ENCODE measurements at regions of chr7 and their contacts with region 1.

Region 1: DNA sequence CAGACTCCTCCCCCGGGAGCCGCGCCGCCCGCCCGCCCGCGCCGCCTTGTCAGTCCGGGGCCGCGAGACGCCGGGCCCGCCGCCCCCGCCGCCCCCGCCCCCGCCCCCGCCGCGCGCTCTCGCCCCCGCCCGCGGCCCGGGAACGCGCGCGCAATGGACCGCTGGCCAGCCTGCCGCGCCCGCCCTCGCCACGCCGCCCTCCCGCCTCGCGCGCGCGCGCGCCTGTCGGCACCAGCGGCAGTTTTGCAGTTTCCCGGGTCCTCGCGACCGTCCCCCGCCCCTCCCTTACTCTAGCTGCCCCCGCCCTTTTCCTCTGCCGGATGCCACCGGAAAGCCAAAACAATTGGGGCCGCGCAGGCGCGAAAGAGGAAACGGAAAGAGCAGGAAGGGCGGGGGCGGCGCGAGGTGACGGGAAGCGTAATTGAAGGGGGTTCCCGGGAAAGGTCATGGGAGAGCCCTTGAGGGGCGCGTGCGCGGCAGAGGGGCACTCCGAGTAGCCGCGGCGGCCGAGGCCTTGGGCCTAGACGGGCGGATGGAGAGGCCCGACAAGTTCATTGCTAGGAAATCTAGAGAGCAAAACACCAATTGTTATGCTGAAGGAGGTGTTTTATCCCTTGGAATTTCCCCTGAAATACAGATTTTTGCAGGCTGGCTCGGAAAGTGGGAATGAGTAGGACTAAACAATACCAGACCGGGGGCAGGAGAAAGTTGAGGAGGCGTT is 400 bp upstream of the KBTBD2 start:
- DNase-seq: peak; percentile 99
- H3K4me3 Mint-ChIP-seq: peak overlapping the region; percentile 91
- H3K27ac Mint-ChIP-seq: peak overlapping the region; percentile 100
- H3K4me1 Mint-ChIP-seq: peaks cover 51% of the 10 kb centered on the region
- H3K27me3 Mint-ChIP-seq: no peaks in the 10 kb centered on the region

Region 2: GRCh38 chr7:32506266-32507054 is 385.5 kb before region 1 on chr7:
- CTCF ChIA-PET with region 1: no interaction called
- POLR2A ChIA-PET with region 1: no interaction called
- intact Hi-C with region 1: loop called (anchors 2 kb)
- DNase-seq: peak; percentile 50
- H3K4me3 Mint-ChIP-seq: no peak overlapping the region
- H3K27ac Mint-ChIP-seq: peak overlapping the region; percentile 52
- H3K4me1 Mint-ChIP-seq: peaks cover 56% of the 10 kb centered on the region
- H3K27me3 Mint-ChIP-seq: no peaks in the 10 kb centered on the region

Region 3: DNA sequence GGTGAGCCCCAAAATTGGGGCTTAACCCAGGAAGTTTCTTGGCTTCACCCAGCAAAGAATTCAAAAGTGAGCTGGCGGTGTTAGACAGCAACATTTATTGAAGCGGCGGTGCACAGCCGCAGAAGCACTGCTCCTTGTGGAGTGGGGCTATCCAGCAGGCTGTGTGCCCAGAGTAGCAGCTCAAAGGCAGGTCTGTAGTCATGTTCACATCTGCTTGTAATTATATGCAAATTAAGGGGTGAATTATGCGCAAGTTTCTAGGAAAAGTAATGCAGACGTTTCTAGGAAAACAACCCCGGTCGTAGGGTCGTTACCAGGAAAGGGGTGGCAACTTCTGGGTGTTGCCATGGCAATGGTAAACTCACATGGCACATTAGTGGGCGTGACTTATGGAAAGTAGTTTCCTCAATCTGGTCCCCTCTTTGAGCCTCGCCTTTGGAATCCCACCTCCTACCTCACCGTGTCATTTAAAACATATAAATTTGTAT is 13.3 kb after region 1 on chr7:
- CTCF ChIA-PET with region 1: interaction called, 8 read pairs
- POLR2A ChIA-PET with region 1: interaction called, 98 read pairs
- intact Hi-C with region 1: loop called (anchors 1 kb)
- DNase-seq: peak; percentile 89
- H3K4me3 Mint-ChIP-seq: peak overlapping the region; percentile 73
- H3K27ac Mint-ChIP-seq: peak overlapping the region; percentile 93
- H3K4me1 Mint-ChIP-seq: peaks cover 17% of the 10 kb centered on the region
- H3K27me3 Mint-ChIP-seq: no peaks in the 10 kb centered on the region

Region 4: GRCh38 chr7:32921896-32922295 is 29.9 kb after region 1 on chr7:
- CTCF ChIA-PET with region 1: no interaction called
- POLR2A ChIA-PET with region 1: no interaction called
- intact Hi-C with region 1: no loop called
- DNase-seq: no peak
- H3K4me3 Mint-ChIP-seq: no peak overlapping the region
- H3K27ac Mint-ChIP-seq: no peak overlapping the region
- H3K4me1 Mint-ChIP-seq: no peaks in the 10 kb centered on the region
- H3K27me3 Mint-ChIP-seq: no peaks in the 10 kb centered on the region

Region 5: DNA sequence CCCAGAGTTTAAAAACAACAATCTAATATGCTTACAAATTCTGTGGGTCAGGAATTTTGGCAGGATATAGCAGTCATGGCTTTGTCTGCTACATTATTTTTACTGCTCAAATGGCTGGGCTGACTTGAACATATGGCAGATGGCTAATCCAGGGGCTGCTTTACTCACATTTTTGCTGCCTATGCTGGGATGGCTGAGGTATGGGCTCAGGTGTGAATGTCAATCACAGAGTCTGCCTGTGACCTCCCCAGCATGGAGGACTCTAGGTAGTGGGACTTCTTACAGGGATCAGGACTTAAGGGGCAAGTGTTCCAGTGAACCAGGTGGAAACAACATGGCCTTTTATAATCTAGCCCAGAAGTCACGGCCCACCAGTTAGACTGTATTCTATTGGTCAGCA is 60.9 kb after region 1 on chr7:
- CTCF ChIA-PET with region 1: no interaction called
- POLR2A ChIA-PET with region 1: no interaction called
- intact Hi-C with region 1: no loop called
- DNase-seq: no peak
- H3K4me3 Mint-ChIP-seq: no peak overlapping the region
- H3K27ac Mint-ChIP-seq: no peak overlapping the region
- H3K4me1 Mint-ChIP-seq: peaks cover under 1% of the 10 kb centered on the region
- H3K27me3 Mint-ChIP-seq: peaks cover 7% of the 10 kb centered on the region

Region 6: DNA sequence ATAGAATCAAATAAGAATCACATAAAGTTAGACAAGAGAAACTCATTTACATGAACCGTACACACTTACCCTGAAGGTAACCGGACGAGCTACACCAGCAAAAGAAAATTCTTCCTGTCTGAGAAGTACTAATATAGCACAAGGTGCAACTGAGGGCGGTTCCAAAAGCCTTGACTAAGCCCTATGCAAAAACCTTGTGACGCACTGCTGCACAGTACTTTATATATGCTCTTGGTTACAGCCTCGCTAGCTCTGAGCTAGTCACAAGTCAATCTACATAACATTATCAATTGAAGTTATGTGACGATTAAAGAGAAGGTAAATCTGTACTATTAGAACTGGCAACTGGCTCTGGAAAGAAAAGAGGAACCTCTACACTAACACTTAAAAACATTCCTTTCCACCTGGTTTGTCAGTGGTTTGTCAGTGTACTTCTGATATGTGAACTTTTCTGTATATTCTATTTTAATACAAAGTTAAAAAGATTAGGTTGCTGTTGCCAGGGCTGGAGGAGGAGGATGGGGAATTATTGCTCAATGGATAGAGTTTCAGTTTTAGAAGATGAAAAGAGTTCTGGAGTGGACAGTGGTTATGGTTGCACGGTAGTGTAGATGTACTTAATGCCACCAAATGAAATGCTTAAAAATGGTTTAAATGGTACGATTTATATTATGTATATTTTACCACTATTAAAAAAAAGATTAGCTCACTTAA is 149.0 kb after region 1 on chr7:
- CTCF ChIA-PET with region 1: interaction called, 3 read pairs
- POLR2A ChIA-PET with region 1: interaction called, 12 read pairs
- intact Hi-C with region 1: loop called (anchors 1 kb)
- DNase-seq: peak; percentile 74
- H3K4me3 Mint-ChIP-seq: peak overlapping the region; percentile 58
- H3K27ac Mint-ChIP-seq: peak overlapping the region; percentile 78
- H3K4me1 Mint-ChIP-seq: peaks cover 60% of the 10 kb centered on the region
- H3K27me3 Mint-ChIP-seq: no peaks in the 10 kb centered on the region

Region 7: GRCh38 chr7:33062782-33063443 is 171.0 kb after region 1 on chr7:
- CTCF ChIA-PET with region 1: no interaction called
- POLR2A ChIA-PET with region 1: interaction called, 18 read pairs
- intact Hi-C with region 1: loop called (anchors 1 kb)
- DNase-seq: peak; percentile 95
- H3K4me3 Mint-ChIP-seq: peak overlapping the region; percentile 90
- H3K27ac Mint-ChIP-seq: peak overlapping the region; percentile 88
- H3K4me1 Mint-ChIP-seq: peaks cover 31% of the 10 kb centered on the region
- H3K27me3 Mint-ChIP-seq: no peaks in the 10 kb centered on the region

Region 8: DNA sequence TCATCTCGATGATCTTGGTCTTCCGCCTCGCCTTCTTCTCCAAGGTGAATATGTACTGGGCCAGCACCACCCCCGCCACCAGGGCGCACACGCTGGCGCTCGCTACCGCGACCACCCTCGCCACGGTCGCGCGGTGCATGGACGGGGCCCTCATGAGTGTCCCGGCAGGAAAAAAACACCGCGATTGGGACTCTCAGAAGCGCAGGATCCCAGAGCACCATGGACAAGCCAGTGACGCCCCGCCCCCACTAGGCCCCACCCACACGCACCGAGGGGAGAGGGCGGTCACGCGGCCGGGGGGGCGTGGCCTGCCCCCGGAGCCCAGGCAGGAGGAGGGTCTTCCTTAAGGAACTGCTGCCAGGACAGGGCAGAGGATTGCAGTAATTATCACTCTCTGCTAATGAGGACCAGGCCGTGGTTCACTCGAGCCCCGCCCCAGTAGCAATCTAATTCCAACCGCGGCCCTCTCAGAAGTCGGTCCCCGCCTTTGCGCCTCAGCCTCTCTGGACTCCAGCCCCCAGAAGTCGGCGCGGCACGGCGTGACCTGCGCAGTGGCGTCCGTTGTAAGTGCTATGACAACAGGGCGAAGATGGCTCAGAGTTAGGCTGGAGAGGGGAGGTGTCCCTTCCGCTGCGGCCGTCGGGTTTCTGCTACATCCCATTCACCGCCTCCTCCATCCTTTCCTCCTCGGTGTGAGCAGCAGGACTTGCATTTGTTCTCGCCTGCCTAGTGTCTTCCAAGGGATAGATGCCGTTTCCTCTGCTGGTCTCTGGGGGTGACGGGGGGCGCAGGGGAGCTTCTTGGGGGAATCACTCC is 237.2 kb after region 1 on chr7 and contains the start of gene BBS9:
- CTCF ChIA-PET with region 1: no interaction called
- POLR2A ChIA-PET with region 1: no interaction called
- intact Hi-C with region 1: loop called (anchors 1 kb)
- DNase-seq: peak; percentile 95
- H3K4me3 Mint-ChIP-seq: peak within 1 kb of the TSS; percentile 96
- H3K27ac Mint-ChIP-seq: peak within 1 kb of the TSS; percentile 78
- H3K4me1 Mint-ChIP-seq: peaks cover 18% of the 10 kb centered on the region
- H3K27me3 Mint-ChIP-seq: no peaks in the 10 kb centered on the region
- total RNA-seq, gene BBS9: 9.2 to 9.5 TPM

Measured in activated CD4-positive, alpha-beta memory T cell treated with anti-CD3 and anti-CD28 coated beads for 36 hours (primary cell).